ENCODE measurements at regions of chr11 and their contacts with region 1.

Region 1: DNA sequence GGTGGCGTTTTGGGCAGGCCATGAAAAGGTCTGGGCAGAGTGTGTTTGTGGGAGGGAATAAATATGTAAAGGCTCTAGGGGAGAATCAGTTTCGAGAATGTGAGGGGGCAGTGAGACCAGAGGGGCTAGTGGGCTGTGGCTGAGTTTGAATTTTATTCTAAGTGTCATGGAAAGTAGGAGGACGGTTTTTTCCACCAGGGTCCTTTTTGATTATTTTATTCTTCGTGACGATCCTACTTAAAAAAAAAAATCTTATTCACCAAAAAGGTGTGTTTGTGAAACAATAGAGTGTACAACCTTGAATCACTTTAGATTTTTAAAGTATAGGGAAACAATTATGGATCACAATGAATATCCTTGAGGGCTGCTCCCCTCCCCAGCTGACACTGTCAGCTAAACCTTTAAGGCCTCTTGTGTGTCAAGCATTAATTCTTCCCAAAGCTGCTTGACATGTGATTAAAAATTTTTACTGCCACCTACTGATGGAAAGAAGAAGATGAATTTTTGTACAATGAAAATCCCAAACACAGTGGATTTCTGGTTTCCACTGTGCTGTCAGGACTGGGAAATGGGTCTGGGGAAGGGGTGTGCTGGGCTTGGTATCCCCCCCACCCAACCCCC is 107.5 kb upstream of the OR4B1 start:
- DNase-seq: peak in 2 of 3 donors; percentile 32 to 51
- H3K4me3 ChIP-seq: peak overlapping the region in 1 of 3 experiments; percentile 56
- H3K4me3 Mint-ChIP-seq: no peak overlapping the region
- H3K27ac ChIP-seq: peak overlapping the region in 1 of 2 donors; percentile 16
- H3K27ac Mint-ChIP-seq: peak overlapping the region; percentile 62 to 90 (median 83)
- H3K4me1 ChIP-seq: peaks cover 58 to 63% of the 10 kb centered on the region in 2 donors
- H3K4me1 Mint-ChIP-seq: peaks cover 64% of the 10 kb centered on the region
- H3K27me3 ChIP-seq: no peaks in the 10 kb centered on the region
- H3K27me3 Mint-ChIP-seq: peaks cover 0 to 1% (median 0%) of the 10 kb centered on the region in 3 donors
- CTCF ChIP-seq: no peak

Region 2: DNA sequence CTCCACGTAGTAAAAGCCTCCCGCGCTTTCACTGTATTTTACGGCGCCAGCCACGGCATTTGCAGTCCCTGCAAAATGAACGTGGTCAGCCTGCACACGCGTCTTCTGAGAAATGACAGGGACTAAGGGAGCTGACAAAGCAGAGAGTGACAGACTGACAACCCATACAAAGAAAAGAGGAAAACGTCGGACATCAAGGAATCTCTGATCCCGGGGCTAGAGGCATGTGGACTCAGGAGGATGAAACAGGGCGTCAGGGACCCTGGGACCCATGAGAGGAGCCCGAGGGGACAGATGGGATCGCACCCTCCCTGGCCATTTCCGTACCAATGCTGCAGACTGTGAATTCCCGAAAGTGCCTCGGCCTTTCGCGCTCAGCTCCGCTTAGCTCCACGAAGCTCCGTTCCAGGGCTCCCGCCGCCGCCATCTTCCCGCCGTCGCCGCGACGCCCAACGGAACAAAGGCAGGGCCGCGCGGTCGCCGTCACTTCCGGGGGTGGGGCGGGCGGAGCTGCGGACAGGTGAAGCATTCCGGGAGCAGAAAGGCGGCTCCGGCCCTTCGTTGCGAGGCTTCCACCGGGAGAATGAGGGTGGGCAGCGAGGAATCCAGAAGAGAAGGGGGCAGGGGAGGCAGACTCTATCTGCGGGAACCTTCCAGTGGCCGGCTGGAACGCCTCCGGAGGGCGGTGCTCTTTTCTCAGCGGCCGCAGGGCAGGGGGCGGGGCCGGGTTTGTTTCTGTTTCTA is 261.1 kb before region 1 on chr11 and contains the start of gene NUP160:
- intact Hi-C with region 1: loop called (anchors 2 to 5 kb)
- DNase-seq: peak; percentile 53 to 67 (median 64)
- H3K4me3 ChIP-seq: peak within 1 kb of the TSS; percentile 90 to 97 (median 95)
- H3K4me3 Mint-ChIP-seq: peak within 1 kb of the TSS; percentile 94 to 99
- H3K27ac ChIP-seq: peak within 1 kb of the TSS; percentile 53 to 94
- H3K27ac Mint-ChIP-seq: peak within 1 kb of the TSS; percentile 95 to 99 (median 97)
- H3K4me1 ChIP-seq: peaks cover 40 to 42% of the 10 kb centered on the region in 2 donors
- H3K4me1 Mint-ChIP-seq: peaks cover 21% of the 10 kb centered on the region
- H3K27me3 ChIP-seq: no peaks in the 10 kb centered on the region
- H3K27me3 Mint-ChIP-seq: peaks cover 0 to 2% (median 0%) of the 10 kb centered on the region in 3 donors
- CTCF ChIP-seq: no peak
- polyA plus RNA-seq, gene NUP160: 10.6 to 15.7 (median 10.9) TPM

Region 3: GRCh38 chr11:47932544-47932943 is 176.6 kb before region 1 on chr11:
- intact Hi-C with region 1: loop called (anchors 1 to 2 kb)
- DNase-seq: no peak
- H3K4me3 ChIP-seq: no peak overlapping the region
- H3K4me3 Mint-ChIP-seq: no peak overlapping the region
- H3K27ac ChIP-seq: no peak overlapping the region
- H3K27ac Mint-ChIP-seq: no peak overlapping the region
- H3K4me1 ChIP-seq: peaks cover 21 to 32% of the 10 kb centered on the region in 2 donors
- H3K4me1 Mint-ChIP-seq: peaks cover 24% of the 10 kb centered on the region
- H3K27me3 ChIP-seq: no peaks in the 10 kb centered on the region
- H3K27me3 Mint-ChIP-seq: peaks cover 0 to 2% (median 0%) of the 10 kb centered on the region in 3 donors
- CTCF ChIP-seq: no peak

Region 4: GRCh38 chr11:47980245-47981049 is 128.7 kb before region 1 on chr11 and contains the start of gene PTPRJ:
- intact Hi-C with region 1: loop called in 1 of 2 experiments (anchors 2 kb)
- DNase-seq: peak in 2 of 3 donors; percentile 46 to 67
- H3K4me3 ChIP-seq: peak within 1 kb of the TSS; percentile 69 to 96 (median 80)
- H3K4me3 Mint-ChIP-seq: peak within 1 kb of the TSS; percentile 94 to 98
- H3K27ac ChIP-seq: peak within 1 kb of the TSS; percentile 71 to 76
- H3K27ac Mint-ChIP-seq: peak within 1 kb of the TSS in 6 of 7 donors; percentile 6 to 96 (median 79)
- H3K4me1 ChIP-seq: peaks cover 48 to 59% of the 10 kb centered on the region in 2 donors
- H3K4me1 Mint-ChIP-seq: peaks cover 55% of the 10 kb centered on the region
- H3K27me3 ChIP-seq: peaks cover 0 to 7% of the 10 kb centered on the region in 2 donors
- H3K27me3 Mint-ChIP-seq: peaks cover 0 to 11% (median 7%) of the 10 kb centered on the region in 3 donors
- CTCF ChIP-seq: no peak
- polyA plus RNA-seq, gene PTPRJ: 10.0 to 36.4 (median 14.6) TPM

Region 5: DNA sequence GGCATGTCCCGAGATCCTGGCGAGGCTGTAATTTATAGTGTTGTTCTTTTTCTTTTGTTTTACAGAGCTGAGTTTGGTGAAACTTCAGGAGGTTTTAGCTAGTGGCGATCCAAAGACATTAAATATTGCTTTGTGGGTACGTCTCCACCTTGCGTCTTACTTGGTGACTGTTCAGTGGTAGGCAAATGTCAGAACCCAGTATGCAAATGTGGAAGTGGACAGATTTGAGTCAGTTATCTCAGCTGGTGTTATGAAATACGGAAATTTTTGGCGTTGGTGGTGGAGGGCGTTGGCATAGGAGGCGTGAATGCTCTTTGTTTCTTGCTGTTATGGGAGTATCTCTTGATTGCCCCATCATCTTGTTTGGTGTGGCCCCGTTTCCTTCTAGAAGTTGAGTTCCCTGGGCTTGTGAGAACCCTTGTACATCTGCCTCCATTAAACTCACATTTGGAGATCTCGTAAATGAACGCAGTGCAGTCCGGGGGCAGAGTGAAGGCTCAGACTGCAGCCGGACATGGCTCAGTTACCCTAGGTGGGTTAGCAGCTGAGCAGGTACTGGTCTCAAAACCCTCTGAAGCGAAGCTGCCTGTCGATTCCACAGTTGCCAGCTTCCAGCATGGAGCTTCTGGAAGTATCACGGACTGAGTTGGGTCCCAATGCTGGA is 88.9 kb before region 1 on chr11:
- intact Hi-C with region 1: loop called in 1 of 2 experiments (anchors 5 kb)
- DNase-seq: peak; percentile 95 to 98 (median 95)
- H3K4me3 ChIP-seq: peak overlapping the region in 1 of 3 experiments; percentile 54
- H3K4me3 Mint-ChIP-seq: peak overlapping the region; percentile 56 to 83
- H3K27ac ChIP-seq: peak overlapping the region; percentile 84 to 89
- H3K27ac Mint-ChIP-seq: peak overlapping the region; percentile 92 to 99 (median 97)
- H3K4me1 ChIP-seq: peaks cover 86 to 92% of the 10 kb centered on the region in 2 donors
- H3K4me1 Mint-ChIP-seq: peaks cover 93% of the 10 kb centered on the region
- H3K27me3 ChIP-seq: no peaks in the 10 kb centered on the region
- H3K27me3 Mint-ChIP-seq: peaks cover 0 to 2% (median 0%) of the 10 kb centered on the region in 3 donors
- CTCF ChIP-seq: peak; percentile 50

Region 6: GRCh38 chr11:48034926-48035871 is 74.0 kb before region 1 on chr11:
- intact Hi-C with region 1: loop called in 1 of 2 experiments (anchors 5 kb)
- DNase-seq: peak in 1 of 3 donors; percentile 55
- H3K4me3 ChIP-seq: peak overlapping the region in 1 of 3 experiments; percentile 10
- H3K4me3 Mint-ChIP-seq: peak overlapping the region in 1 of 2 donors; percentile 64
- H3K27ac ChIP-seq: peak overlapping the region; percentile 46 to 50
- H3K27ac Mint-ChIP-seq: peak overlapping the region; percentile 57 to 83 (median 74)
- H3K4me1 ChIP-seq: peaks cover 66 to 78% of the 10 kb centered on the region in 2 donors
- H3K4me1 Mint-ChIP-seq: peaks cover 79% of the 10 kb centered on the region
- H3K27me3 ChIP-seq: no peaks in the 10 kb centered on the region
- H3K27me3 Mint-ChIP-seq: peaks cover 0 to 3% (median 0%) of the 10 kb centered on the region in 3 donors
- CTCF ChIP-seq: no peak

Region 7: DNA sequence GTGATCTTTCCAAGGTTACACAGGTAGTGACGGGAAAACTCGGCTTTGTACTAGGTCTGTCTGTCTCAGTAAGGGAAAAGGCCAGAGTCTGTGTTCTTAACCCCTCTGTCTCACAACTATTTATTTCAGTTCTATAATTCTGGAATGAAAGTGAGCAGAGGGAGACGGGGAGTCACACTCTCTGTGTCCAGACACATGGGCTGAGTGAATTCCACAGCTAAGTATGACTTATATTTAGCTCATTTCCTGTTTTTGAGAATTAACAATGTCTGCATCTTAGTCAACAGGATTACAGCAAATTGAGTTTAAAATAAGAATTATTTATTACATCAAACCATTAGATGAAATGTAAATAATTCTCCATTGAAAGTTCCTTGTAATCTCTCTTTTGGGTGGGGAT is 45.0 kb after region 1 on chr11:
- intact Hi-C with region 1: no loop called
- DNase-seq: no peak
- H3K4me3 ChIP-seq: no peak overlapping the region
- H3K4me3 Mint-ChIP-seq: no peak overlapping the region
- H3K27ac ChIP-seq: no peak overlapping the region
- H3K27ac Mint-ChIP-seq: no peak overlapping the region
- H3K4me1 ChIP-seq: no peaks in the 10 kb centered on the region
- H3K4me1 Mint-ChIP-seq: no peaks in the 10 kb centered on the region
- H3K27me3 ChIP-seq: no peaks in the 10 kb centered on the region
- H3K27me3 Mint-ChIP-seq: no peaks in the 10 kb centered on the region
- CTCF ChIP-seq: no peak